H1 (cell line): ENCODE measurements at regions of chr16 and their contacts with region 1.

Region 1: GRCh38 chr16:77905459-77905858 is 116.9 kb upstream of the CLEC3A start:
- DNase-seq: no peak
- H3K4me3 ChIP-seq: no peak overlapping the region
- H3K27ac ChIP-seq: no peak overlapping the region
- H3K4me1 ChIP-seq: no peaks in the 10 kb centered on the region
- H3K27me3 ChIP-seq: no peaks in the 10 kb centered on the region
- CTCF ChIP-seq: no peak
- EP300 ChIP-seq: no peak
- POLR2A ChIP-seq: no peak
- RAD21 ChIP-seq: no peak

Region 2: DNA sequence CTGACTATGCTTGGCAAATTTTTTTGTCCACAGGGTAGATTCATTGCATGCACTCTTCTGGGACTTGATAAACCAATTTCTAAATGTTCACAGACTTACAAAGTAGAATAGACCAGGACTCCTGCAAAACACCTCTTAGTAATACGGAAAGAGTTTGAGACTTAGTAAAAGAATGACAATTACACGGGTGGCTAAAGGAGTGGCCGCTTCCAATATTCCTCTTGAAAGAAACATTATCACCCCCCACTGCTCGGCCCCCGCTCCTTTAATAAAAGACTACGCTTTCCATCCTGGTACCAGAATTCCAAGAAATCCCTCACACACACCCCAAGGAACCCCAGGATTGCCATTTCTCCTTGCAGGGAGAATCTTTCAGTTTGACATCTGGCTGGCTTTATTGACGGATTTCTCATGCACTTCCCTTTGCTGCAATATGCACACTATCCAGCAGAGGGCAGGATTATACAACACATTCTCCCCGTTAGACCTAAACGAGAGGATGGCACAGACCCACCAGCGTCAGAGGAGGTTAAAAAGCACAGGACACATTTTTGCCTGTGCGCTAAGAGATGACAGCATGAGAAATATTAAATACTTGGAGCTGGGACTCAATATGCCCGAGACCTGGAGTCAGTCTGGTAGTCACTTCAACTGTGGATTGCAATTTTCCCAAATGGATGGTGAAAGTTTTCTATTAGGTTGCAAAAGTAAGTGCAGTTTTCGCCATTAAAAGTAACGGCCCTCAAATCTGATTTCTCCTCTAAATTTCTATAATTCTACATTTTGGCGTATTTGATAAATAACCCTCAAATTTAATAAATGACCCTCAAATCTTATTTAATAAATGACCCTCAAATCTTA is 229.8 kb before region 1 on chr16:
- CTCF ChIA-PET with region 1: interaction called, 10 read pairs
- POLR2A ChIA-PET with region 1: no interaction called
- DNase-seq: peak; percentile 29 to 87
- H3K4me3 ChIP-seq: no peak overlapping the region
- H3K27ac ChIP-seq: no peak overlapping the region
- H3K4me1 ChIP-seq: no peaks in the 10 kb centered on the region; a peak in 1 of 7 replicates
- H3K27me3 ChIP-seq: peaks cover 0 to 1% (median 0%) of the 10 kb centered on the region in 4 experiments; a peak in 1 of 7 replicates
- CTCF ChIP-seq: peak; percentile 44 to 95 (median 91)
- EP300 ChIP-seq: no peak
- POLR2A ChIP-seq: no peak
- RAD21 ChIP-seq: peak; percentile 99 to 100

Region 3: GRCh38 chr16:77993111-77993985 is 87.9 kb after region 1 on chr16:
- CTCF ChIA-PET with region 1: no interaction called
- POLR2A ChIA-PET with region 1: no interaction called
- DNase-seq: no peak
- H3K4me3 ChIP-seq: no peak overlapping the region
- H3K27ac ChIP-seq: peak overlapping the region; percentile 71
- H3K4me1 ChIP-seq: peaks cover 4 to 22% (median 15%) of the 10 kb centered on the region in 4 experiments; a peak in 6 of 7 replicates
- H3K27me3 ChIP-seq: no peaks in the 10 kb centered on the region
- CTCF ChIP-seq: no peak
- EP300 ChIP-seq: no peak
- POLR2A ChIP-seq: no peak; a peak in 1 of 3 replicates
- RAD21 ChIP-seq: no peak